Activated CD8-positive, alpha-beta T cell treated with anti-CD3 and anti-CD28 coated beads, Interleukin-2, amount 10 ng/mL, durations not matched to agents 7 days and 5 days (primary cell): ENCODE measurements at regions of chr7 and their contacts with region 1.

Region 1: DNA sequence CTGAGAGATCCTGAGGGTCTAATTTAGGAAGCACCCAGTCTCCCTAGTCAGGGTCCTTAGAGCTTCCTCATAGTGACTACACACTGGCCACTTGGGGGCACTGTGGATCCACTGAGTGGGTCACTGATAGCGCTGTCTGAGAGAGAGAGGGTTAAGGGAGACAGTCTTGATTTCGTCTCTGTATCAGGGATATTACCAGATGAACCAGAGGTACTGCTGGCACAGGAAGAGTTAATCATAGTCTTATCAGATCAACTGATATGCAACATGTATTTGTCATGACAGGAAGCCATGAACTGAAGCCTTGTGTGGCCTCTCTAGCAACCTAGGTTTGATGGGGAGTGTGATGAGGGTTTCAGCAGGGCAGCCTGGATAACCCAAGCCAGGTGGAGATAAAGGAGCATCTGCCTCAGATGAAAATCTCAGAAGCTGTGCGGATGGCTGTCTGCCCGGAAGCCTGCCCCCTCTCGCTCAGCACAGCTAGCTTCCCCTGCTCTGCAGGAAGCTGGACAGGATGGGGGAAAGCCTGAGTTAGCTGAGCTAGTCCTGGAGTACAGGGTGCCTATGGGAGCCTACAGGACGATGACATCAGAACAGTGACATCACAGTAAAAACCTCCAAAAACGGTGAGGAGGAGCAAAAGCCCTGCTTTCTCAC is 214.0 kb upstream of the PRSS1 start:
- DNase-seq: peak; percentile 82
- ATAC-seq: peak; percentile 95
- H3K4me3 Mint-ChIP-seq: peak overlapping the region; percentile 52
- H3K27ac Mint-ChIP-seq: peak overlapping the region; percentile 70
- H3K4me1 Mint-ChIP-seq: peaks cover 29% of the 10 kb centered on the region
- H3K27me3 Mint-ChIP-seq: peaks cover 2% of the 10 kb centered on the region

Region 2: DNA sequence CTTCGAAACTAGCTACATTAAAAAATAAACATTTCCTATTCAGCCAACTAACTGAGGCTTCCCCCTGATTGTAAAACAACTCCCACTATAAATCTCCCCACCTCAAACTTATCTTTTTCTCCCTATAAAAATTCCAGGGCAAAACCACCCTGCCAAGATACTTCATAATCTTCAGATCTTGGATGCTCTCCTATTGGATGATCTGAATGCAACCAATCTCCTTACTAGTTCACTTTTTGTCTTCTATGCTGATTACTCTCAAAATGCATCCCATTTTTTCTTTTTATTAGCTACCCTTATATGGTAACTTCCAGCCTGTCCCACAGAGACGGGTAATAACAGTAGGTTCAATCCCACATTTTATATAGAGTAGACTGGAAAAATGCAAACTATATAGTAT is 262.4 kb before region 1 on chr7:
- CTCF ChIA-PET with region 1: no interaction called
- POLR2A ChIA-PET with region 1: no interaction called
- DNase-seq: no peak
- ATAC-seq: no peak
- H3K4me3 Mint-ChIP-seq: no peak overlapping the region
- H3K27ac Mint-ChIP-seq: no peak overlapping the region
- H3K4me1 Mint-ChIP-seq: no peaks in the 10 kb centered on the region
- H3K27me3 Mint-ChIP-seq: peaks cover 28% of the 10 kb centered on the region

Region 3: GRCh38 chr7:142496545-142497041 is 38.7 kb before region 1 on chr7:
- CTCF ChIA-PET with region 1: interaction called, 18 read pairs
- POLR2A ChIA-PET with region 1: no interaction called
- DNase-seq: peak; percentile 33
- ATAC-seq: peak; percentile 59
- H3K4me3 Mint-ChIP-seq: peak overlapping the region; percentile 16
- H3K27ac Mint-ChIP-seq: no peak overlapping the region
- H3K4me1 Mint-ChIP-seq: peaks cover 47% of the 10 kb centered on the region
- H3K27me3 Mint-ChIP-seq: peaks cover 3% of the 10 kb centered on the region

Region 4: DNA sequence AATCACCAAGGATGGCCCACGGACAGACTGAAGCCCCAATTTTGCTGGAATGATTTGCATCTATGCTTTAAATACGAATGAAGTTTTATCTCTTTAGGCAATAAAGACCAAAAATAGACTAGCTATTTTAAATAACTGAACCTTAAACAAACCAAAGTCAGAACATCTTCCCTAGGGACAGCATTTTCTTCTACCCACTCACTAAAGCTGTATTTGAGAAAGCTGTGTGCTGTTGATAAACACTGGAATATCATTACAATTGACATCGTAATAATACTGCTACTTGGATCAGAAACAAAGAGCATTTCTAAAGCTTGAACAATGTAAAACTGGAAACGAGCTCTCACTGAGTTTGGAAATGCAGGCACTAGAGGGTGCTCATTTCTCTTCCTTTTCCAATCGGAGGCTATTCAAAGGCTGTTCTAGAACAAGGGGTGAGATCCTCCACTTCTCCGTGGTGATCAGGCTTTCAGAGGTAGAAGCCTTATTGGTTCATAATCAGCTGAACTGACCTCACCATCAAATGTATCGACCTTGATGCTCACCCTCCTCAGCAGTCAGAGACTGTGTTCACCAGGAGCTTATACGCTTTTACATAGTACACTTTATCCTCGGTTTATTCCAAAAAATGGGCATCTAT is 11.3 kb before region 1 on chr7:
- CTCF ChIA-PET with region 1: interaction called, 38 read pairs
- POLR2A ChIA-PET with region 1: no interaction called
- DNase-seq: no peak
- ATAC-seq: no peak
- H3K4me3 Mint-ChIP-seq: no peak overlapping the region
- H3K27ac Mint-ChIP-seq: no peak overlapping the region
- H3K4me1 Mint-ChIP-seq: peaks cover 9% of the 10 kb centered on the region
- H3K27me3 Mint-ChIP-seq: peaks cover 3% of the 10 kb centered on the region

Region 5: DNA sequence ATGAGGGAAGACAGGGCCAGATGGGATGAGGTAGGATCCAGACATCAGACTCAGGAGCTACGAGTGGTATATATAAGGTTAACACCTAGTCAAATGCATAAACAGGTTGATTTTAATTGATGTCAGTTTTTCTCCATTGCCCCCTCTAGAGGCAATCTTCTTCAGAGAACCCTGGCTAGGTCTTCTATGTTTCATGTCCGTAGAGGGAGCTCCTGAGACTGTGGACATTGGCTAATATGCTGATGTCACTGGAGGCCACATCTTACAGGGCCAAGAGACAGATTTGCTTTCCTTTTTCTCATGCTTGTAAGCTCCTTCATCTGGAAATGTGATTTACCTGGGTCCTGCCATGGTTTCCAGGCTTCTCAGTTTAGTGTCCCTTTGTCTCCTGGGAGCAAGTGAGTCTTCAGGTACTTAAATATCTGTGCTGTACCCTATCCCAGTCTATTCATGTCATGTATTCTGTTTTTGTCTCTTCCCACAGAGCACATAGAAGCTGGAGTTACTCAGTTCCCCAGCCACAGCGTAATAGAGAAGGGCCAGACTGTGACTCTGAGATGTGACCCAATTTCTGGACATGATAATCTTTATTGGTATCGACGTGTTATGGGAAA is 52.4 kb after region 1 on chr7:
- CTCF ChIA-PET with region 1: interaction called, 36 read pairs
- POLR2A ChIA-PET with region 1: interaction called, 4 read pairs
- DNase-seq: peak; percentile 43
- ATAC-seq: peak; percentile 89
- H3K4me3 Mint-ChIP-seq: peak overlapping the region; percentile 17
- H3K27ac Mint-ChIP-seq: no peak overlapping the region
- H3K4me1 Mint-ChIP-seq: no peaks in the 10 kb centered on the region
- H3K27me3 Mint-ChIP-seq: no peaks in the 10 kb centered on the region

Region 6: GRCh38 chr7:142626420-142627035 is 91.3 kb after region 1 on chr7:
- CTCF ChIA-PET with region 1: interaction called, 12 read pairs
- POLR2A ChIA-PET with region 1: no interaction called
- DNase-seq: peak; percentile 74
- ATAC-seq: peak; percentile 82
- H3K4me3 Mint-ChIP-seq: peak overlapping the region; percentile 71
- H3K27ac Mint-ChIP-seq: peak overlapping the region; percentile 79
- H3K4me1 Mint-ChIP-seq: peaks cover 3% of the 10 kb centered on the region
- H3K27me3 Mint-ChIP-seq: peaks cover 9% of the 10 kb centered on the region

Region 7: DNA sequence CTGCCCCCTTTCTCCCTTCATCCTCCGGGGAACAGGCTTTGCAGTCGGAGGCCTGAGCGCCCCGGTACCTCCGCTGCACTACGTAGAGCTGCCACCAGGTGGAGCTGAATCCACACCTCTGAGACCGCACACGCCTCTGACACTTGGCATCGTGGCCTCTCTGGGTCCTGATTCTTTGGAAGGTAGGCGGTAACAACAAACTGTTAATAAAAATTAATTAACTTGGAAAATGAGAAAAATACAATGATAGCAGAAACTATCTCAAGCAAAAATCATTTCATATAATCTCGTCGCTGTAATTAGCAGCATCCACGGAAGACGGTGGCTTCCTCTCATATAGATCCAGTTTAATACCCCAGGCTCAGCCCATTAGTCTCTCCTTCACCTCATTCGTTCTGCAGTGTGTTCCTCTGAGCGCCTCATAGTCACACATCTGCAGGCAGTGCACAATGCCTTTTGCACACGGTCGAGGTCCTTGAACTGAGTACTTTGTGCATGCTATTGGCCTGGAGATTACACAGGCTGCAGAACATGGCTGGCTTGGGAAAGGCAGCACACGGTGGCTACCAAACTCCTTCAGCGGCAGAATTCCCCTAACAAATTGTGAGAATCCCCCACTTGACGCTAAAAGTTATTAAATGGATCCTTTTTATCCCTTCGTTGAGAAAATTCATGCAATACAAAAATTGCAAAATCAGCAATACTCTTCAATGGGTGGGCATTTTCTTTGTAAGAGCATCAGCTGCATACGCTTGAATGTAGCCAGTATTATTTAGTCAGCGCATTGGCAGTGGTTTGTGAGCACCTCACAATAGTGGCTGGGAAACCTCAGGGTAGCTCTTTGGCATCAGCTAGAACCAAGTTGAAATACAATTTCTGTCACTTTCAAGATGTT is 473.0 kb after region 1 on chr7:
- CTCF ChIA-PET with region 1: interaction called, 23 read pairs
- POLR2A ChIA-PET with region 1: no interaction called
- DNase-seq: peak; percentile 86
- ATAC-seq: peak; percentile 93
- H3K4me3 Mint-ChIP-seq: no peak overlapping the region
- H3K27ac Mint-ChIP-seq: no peak overlapping the region
- H3K4me1 Mint-ChIP-seq: peaks cover 2% of the 10 kb centered on the region
- H3K27me3 Mint-ChIP-seq: peaks cover 22% of the 10 kb centered on the region